ENCODE measurements at regions of chr1 and their contacts with region 1.

Region 1: GRCh38 chr1:247487057-247487456 is 29.2 kb upstream of the OR2B11 start:
- DNase-seq: peak in 1 of 3 donors; percentile 38
- ATAC-seq: peak; percentile 78
- H3K4me3 ChIP-seq: no peak overlapping the region
- H3K4me1 ChIP-seq: no peaks in the 10 kb centered on the region
- CTCF ChIP-seq: peak; percentile 10

Region 2: GRCh38 chr1:247390116-247390791 is 96.8 kb before region 1 on chr1:
- intact Hi-C with region 1: loop called in 1 of 2 experiments (anchors 5 kb)
- DNase-seq: peak; percentile 76 to 91 (median 80)
- ATAC-seq: peak; percentile 99
- H3K4me3 ChIP-seq: no peak overlapping the region
- H3K4me1 ChIP-seq: peaks cover 6% of the 10 kb centered on the region
- CTCF ChIP-seq: peak; percentile 74

Region 3: GRCh38 chr1:247574664-247575063 is 87.6 kb after region 1 on chr1:
- intact Hi-C with region 1: no loop called
- DNase-seq: no peak
- ATAC-seq: no peak
- H3K4me3 ChIP-seq: no peak overlapping the region
- H3K4me1 ChIP-seq: no peaks in the 10 kb centered on the region
- CTCF ChIP-seq: no peak

Region 4: GRCh38 chr1:247992986-247993385 is 505.9 kb after region 1 on chr1:
- intact Hi-C with region 1: no loop called
- DNase-seq: no peak
- ATAC-seq: no peak
- H3K4me3 ChIP-seq: no peak overlapping the region
- H3K4me1 ChIP-seq: no peaks in the 10 kb centered on the region
- CTCF ChIP-seq: no peak